ENCODE measurements at regions of chr22 and their contacts with region 1.

Region 1: DNA sequence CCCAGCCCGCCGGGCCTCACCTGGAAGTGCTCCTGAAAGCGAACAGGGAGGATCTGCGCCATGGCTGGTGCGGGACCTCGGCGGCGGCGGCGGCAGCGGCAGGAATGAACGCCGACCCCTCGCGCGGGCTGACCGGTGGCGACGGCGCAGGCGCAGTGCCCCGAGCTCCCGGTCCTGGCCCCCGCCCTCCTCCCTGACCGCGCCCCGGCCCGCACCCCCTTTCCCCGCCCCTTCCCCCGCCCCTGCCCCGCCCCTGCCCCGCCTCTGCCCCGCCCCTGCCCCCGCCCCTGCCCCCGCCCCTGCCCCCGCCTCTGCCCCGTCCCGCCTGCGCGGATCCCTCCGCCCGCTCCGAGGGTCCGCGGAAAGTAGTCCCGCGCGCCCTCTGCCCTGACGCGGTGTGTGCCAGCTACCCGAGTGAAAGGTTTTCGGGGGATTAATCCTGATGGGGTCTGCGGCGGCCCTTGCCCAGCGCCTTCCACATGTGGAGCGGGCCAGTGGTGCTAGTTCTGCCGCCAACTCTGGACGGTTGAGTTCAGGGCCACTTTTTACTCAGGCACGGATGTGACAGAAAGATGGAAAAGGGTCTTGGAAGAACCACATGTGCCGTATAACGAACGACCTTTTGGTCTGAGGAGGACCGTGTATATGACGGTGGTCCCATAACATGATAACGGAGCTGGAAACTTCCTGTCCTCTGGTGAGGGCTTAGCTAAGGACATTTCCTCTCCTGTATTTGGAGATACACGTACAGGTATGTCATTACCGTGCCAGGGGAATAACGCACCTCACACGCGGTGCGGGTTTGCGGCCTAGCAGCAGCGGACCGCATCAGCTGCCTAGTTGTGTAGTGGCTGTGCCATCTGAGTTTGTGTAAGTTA is at the start of gene CLTCL1:
- DNase-seq: peak; percentile 100

Region 2: GRCh38 chr22:19178656-19179496 is 112.9 kb before region 1 on chr22 and contains the start of gene SLC25A1:
- CTCF ChIA-PET with region 1: no interaction called
- POLR2A ChIA-PET with region 1: interaction called, 20 read pairs
- DNase-seq: peak; percentile 97

Region 3: DNA sequence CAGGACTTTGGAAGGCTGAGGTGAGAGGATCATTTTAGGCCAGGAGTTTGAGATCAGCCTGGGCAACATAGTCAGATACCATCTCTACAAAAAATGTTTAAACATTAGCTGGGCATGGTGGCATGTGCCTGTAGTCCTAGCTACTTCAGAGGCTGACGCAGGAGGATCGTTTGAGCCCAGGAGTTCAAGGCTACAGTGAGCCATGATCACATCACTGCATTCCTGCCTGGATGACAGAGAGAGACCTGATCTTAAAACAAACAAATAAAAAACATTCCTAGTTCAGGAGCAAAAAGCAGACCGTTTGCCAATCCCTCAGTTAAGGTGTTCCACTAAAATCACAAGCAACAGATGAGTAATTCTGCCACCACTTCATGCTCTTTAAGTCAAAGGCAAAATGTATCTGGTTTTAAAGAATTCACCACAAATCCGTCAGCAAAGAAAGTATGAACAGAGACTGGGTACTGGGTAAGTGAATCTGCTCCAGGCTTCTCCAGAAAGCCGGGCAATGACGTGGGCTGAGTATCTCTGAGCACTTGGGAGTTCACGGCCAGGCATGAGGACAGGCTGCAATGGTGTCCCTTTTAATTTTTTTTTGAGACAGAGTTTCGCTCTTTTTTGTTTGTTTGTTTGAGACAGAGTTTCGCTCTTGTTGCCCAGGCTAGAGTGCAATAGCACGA is 19.8 kb before region 1 on chr22:
- CTCF ChIA-PET with region 1: interaction called, 3 read pairs
- POLR2A ChIA-PET with region 1: interaction called, 12 read pairs
- DNase-seq: no peak

Measured in HEK293T (cell line).